ENCODE measurements at regions of chr10 and their contacts with region 1.

Region 1: DNA sequence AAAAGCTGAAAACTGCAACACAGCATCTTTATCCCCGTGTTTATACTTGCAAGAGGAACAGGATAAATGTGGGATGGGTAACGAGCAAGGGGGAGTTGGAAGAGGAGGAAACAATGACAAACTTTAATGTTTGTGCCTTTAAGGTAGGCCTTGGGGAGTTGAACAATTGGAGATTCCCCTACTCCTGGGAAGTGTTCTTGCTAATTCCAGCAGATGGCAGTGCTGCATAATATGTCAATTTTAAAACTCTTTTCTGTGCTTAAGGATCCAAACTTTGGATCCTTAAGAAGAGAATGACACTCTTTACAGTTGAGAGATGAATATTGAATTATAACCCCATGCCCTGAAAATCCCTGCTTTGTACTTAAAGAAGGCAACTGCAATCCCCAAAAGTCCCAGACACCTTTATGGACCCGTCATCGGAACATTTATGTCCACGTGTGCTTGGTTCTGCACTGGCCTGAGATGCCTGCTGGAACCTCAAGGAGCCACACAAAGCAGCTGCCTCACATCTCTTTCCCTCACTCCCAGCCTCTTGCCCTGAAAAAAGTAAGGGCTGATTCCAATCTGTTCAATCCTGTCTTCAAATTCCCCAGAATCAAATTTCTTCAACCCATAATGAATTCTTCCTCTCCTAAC is 12.0 kb downstream of the IFIT5 start:
- DNase-seq: no peak
- H3K4me3 ChIP-seq: no peak overlapping the region
- H3K27ac ChIP-seq: no peak overlapping the region
- H3K4me1 ChIP-seq: no peaks in the 10 kb centered on the region
- H3K27me3 ChIP-seq: no peaks in the 10 kb centered on the region
- CTCF ChIP-seq: peak; percentile 65 to 78 (median 72)
- EP300 ChIP-seq: no peak
- POLR2A ChIP-seq: no peak

Region 2: GRCh38 chr10:88952647-88953111 is 473.7 kb before region 1 on chr10 and contains the start of gene ACTA2:
- in situ Hi-C with region 1: no loop called
- intact Hi-C with region 1: no loop called
- DNase-seq: peak; percentile 55
- H3K4me3 ChIP-seq: peak within 1 kb of the TSS; percentile 10 to 38 (median 31)
- H3K27ac ChIP-seq: peak within 1 kb of the TSS; percentile 77 to 88 (median 84)
- H3K4me1 ChIP-seq: peaks cover 0 to 23% (median 0%) of the 10 kb centered on the region in 4 donors
- H3K27me3 ChIP-seq: no peaks in the 10 kb centered on the region
- CTCF ChIP-seq: no peak
- EP300 ChIP-seq: no peak
- POLR2A ChIP-seq: peak; percentile 66
- total RNA-seq, gene ACTA2: 403 to 1,827 (median 457) TPM

Region 3: GRCh38 chr10:89129911-89130310 is 296.4 kb before region 1 on chr10:
- in situ Hi-C with region 1: no loop called
- intact Hi-C with region 1: no loop called
- DNase-seq: no peak
- H3K4me3 ChIP-seq: no peak overlapping the region
- H3K27ac ChIP-seq: no peak overlapping the region
- H3K4me1 ChIP-seq: no peaks in the 10 kb centered on the region
- H3K27me3 ChIP-seq: no peaks in the 10 kb centered on the region
- CTCF ChIP-seq: no peak
- EP300 ChIP-seq: no peak
- POLR2A ChIP-seq: no peak

Region 4: GRCh38 chr10:89684604-89685003 is 258.3 kb after region 1 on chr10:
- in situ Hi-C with region 1: loop called in 2 of 4 experiments (anchors 25 kb)
- intact Hi-C with region 1: no loop called
- DNase-seq: no peak
- H3K4me3 ChIP-seq: no peak overlapping the region
- H3K27ac ChIP-seq: no peak overlapping the region
- H3K4me1 ChIP-seq: no peaks in the 10 kb centered on the region
- H3K27me3 ChIP-seq: no peaks in the 10 kb centered on the region
- CTCF ChIP-seq: no peak
- EP300 ChIP-seq: no peak
- POLR2A ChIP-seq: no peak

Region 5: GRCh38 chr10:89750441-89750840 is 324.1 kb after region 1 on chr10:
- in situ Hi-C with region 1: no loop called
- intact Hi-C with region 1: no loop called
- DNase-seq: no peak
- H3K4me3 ChIP-seq: no peak overlapping the region
- H3K27ac ChIP-seq: no peak overlapping the region
- H3K4me1 ChIP-seq: no peaks in the 10 kb centered on the region
- H3K27me3 ChIP-seq: no peaks in the 10 kb centered on the region
- CTCF ChIP-seq: no peak
- EP300 ChIP-seq: no peak
- POLR2A ChIP-seq: no peak

Measured in transverse colon (tissue), 4 donors.